GM12878 (cell line): ENCODE measurements at regions of chr20 and their contacts with region 1.

Region 1: DNA sequence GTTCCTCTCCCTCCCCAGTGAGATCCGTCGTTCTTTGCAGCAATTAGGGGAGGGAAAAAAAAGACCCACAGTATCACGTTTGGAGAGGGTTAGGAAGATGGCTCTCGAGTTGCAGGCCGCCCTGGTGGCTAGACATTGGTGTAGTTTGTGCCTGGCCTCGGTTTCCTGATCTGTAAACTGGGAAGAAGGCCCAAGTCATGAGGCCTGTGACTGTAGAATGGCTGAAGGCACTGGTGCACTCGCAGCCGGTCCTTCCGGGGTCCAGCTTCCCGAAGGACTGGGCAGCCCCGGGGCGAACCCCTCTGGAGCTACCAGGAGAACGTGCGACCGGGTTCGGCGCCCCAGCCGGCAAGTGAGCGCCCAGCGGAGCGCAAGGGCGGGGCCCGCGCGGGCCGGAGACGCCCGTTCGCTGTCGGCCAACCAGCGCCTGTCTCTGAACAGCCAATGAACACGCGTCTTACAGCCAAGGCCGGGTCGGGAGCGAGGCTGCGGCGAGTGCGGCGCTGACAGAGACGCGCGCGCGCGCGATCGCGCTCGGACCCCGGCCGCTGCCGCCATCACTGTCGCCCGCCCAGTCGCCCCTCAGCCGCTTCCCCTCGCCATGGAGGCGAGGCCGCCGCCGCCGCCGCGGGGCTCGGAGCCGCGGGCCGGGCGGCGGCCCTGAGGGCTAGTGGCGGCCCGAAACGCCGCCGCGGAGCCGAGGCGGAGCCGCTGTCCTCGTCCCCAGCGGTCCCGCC is at the start of gene PTPRA:
- DNase-seq: peak; percentile 59
- ATAC-seq: peak; percentile 94
- H3K4me3 ChIP-seq: peak within 1 kb of the TSS; percentile 99
- H3K27ac ChIP-seq: peak within 1 kb of the TSS; percentile 76
- H3K4me1 ChIP-seq: peaks cover 13% of the 10 kb centered on the region
- H3K27me3 ChIP-seq: no peaks in the 10 kb centered on the region
- CTCF ChIP-seq: no peak
- EP300 ChIP-seq: no peak
- POLR2A ChIP-seq: peak; percentile 92
- RAD21 ChIP-seq: no peak
- polyA plus RNA-seq, gene PTPRA: 3.9 to 8.0 TPM

Region 2: GRCh38 chr20:2900845-2901592 is 27.8 kb after region 1 on chr20:
- CTCF ChIA-PET with region 1: interaction called, 3 read pairs
- POLR2A ChIA-PET with region 1: interaction called, 6 read pairs
- RAD21 ChIA-PET with region 1: interaction called, 10 read pairs
- SMC1A ChIA-PET with region 1: interaction called, 11 read pairs
- in situ Hi-C with region 1: no loop called
- intact Hi-C with region 1: no loop called
- DNase-seq: peak; percentile 24
- ATAC-seq: peak; percentile 73
- H3K4me3 ChIP-seq: 0 out of 2 replicates have a peak overlapping the region, but pooled peaks have one; percentile 11
- H3K27ac ChIP-seq: peak overlapping the region; percentile 51
- H3K4me1 ChIP-seq: peaks cover 27% of the 10 kb centered on the region
- H3K27me3 ChIP-seq: no peaks in the 10 kb centered on the region
- CTCF ChIP-seq: no peak
- EP300 ChIP-seq: no peak
- POLR2A ChIP-seq: no peak
- RAD21 ChIP-seq: no peak

Region 3: DNA sequence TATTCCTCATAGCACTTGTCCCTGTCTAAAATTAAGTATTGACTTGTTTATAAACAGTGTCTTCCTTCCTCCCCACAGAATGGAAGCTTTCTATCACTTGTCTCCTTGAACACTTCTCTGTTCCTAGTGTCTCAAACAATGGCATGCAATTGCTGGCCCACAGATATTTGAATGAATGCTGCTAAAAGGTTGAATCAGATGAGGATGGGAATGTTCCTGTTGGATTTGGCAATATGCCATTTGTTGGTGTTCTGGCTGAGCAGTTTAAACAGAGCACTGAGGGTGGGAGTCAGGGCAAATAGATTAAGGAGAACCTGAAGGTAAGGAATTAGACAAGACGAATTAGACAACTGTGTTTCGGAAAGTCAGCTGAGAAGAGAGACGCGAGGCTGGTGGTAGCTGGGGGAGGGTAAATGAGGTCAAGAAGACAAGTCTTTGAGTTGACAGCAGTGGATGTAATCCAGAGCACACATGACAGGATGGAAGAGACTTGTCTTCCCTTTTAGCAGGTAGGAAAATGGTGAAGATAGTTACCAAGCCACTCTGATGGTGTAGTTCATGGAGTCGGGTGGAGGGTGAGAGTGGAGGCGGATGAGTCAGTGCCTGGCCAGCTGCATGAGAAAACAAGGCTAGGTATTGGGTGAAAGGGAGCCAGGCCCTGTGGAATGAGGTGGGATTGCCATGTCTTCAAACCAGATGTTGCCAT is 111.9 kb after region 1 on chr20:
- CTCF ChIA-PET with region 1: interaction called, 4 read pairs
- POLR2A ChIA-PET with region 1: no interaction called
- RAD21 ChIA-PET with region 1: no interaction called
- SMC1A ChIA-PET with region 1: no interaction called
- in situ Hi-C with region 1: no loop called
- intact Hi-C with region 1: loop called (anchors 5 kb)
- DNase-seq: no peak
- ATAC-seq: no peak
- H3K4me3 ChIP-seq: no peak overlapping the region
- H3K27ac ChIP-seq: no peak overlapping the region
- H3K4me1 ChIP-seq: peaks cover 15% of the 10 kb centered on the region
- H3K27me3 ChIP-seq: no peaks in the 10 kb centered on the region
- CTCF ChIP-seq: no peak
- EP300 ChIP-seq: no peak
- POLR2A ChIP-seq: no peak
- RAD21 ChIP-seq: no peak

Region 4: DNA sequence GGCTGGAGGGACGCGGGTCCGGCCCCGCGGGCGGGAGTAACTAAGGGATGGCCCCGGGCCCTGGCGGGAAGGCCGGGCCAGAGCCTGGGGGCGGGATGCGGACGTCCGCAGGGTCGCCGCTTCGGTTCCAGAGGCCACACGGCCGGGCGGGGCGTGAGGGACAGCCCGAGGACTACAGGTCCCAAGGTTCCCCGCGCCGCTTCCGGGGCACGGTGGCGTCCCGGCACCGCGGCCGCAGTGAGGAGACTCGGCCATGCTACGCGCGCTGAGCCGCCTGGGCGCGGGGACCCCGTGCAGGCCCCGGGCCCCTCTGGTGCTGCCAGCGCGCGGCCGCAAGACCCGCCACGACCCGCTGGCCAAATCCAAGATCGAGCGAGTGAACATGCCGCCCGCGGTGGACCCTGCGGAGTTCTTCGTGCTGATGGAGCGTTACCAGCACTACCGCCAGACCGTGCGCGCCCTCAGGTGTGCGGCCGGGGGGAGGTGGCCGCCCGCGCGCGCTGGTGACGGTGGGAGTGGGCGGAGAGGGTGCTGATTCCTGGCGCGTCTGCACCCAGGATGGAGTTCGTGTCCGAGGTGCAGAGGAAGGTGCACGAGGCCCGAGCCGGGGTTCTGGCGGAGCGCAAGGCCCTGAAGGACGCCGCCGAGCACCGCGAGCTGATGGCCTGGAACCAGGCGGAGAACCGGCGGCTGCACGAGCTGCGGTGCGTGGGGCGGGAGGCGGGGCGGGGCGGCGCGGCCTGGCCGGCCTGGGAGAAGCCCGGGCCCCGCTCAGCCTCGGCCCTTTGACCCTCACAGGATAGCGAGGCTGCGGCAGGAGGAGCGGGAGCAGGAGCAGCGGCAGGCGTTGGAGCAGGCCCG is 172.9 kb after region 1 on chr20 and contains the start of gene MRPS26:
- CTCF ChIA-PET with region 1: no interaction called
- POLR2A ChIA-PET with region 1: no interaction called
- RAD21 ChIA-PET with region 1: no interaction called
- SMC1A ChIA-PET with region 1: no interaction called
- in situ Hi-C with region 1: no loop called
- intact Hi-C with region 1: no loop called
- DNase-seq: no peak
- ATAC-seq: peak; percentile 97
- H3K4me3 ChIP-seq: peak within 1 kb of the TSS; percentile 80
- H3K27ac ChIP-seq: peak within 1 kb of the TSS; percentile 87
- H3K4me1 ChIP-seq: no peaks in the 10 kb centered on the region; the same call in 1 of the 2 replicates
- H3K27me3 ChIP-seq: no peaks in the 10 kb centered on the region
- CTCF ChIP-seq: no peak
- EP300 ChIP-seq: no peak
- POLR2A ChIP-seq: peak; percentile 81
- RAD21 ChIP-seq: no peak
- polyA plus RNA-seq, gene MRPS26: 3.9 to 9.3 TPM